GM23248 (cell line): ENCODE measurements at regions of chr9 and their contacts with region 1.

Region 1: GRCh38 chr9:91193658-91194391 is 167.9 kb downstream of the AUH start:
- DNase-seq: peak; percentile 97
- H3K4me3 ChIP-seq: peak overlapping the region; percentile 75
- H3K27ac ChIP-seq: peak overlapping the region; percentile 100
- H3K4me1 ChIP-seq: peaks cover 45% of the 10 kb centered on the region
- H3K27me3 ChIP-seq: no peaks in the 10 kb centered on the region

Region 2: GRCh38 chr9:91378695-91379127 is 184.9 kb after region 1 on chr9:
- in situ Hi-C with region 1: no loop called
- DNase-seq: peak; percentile 53
- H3K4me3 ChIP-seq: no peak overlapping the region
- H3K27ac ChIP-seq: no peak overlapping the region
- H3K4me1 ChIP-seq: peaks cover 22% of the 10 kb centered on the region
- H3K27me3 ChIP-seq: no peaks in the 10 kb centered on the region

Region 3: DNA sequence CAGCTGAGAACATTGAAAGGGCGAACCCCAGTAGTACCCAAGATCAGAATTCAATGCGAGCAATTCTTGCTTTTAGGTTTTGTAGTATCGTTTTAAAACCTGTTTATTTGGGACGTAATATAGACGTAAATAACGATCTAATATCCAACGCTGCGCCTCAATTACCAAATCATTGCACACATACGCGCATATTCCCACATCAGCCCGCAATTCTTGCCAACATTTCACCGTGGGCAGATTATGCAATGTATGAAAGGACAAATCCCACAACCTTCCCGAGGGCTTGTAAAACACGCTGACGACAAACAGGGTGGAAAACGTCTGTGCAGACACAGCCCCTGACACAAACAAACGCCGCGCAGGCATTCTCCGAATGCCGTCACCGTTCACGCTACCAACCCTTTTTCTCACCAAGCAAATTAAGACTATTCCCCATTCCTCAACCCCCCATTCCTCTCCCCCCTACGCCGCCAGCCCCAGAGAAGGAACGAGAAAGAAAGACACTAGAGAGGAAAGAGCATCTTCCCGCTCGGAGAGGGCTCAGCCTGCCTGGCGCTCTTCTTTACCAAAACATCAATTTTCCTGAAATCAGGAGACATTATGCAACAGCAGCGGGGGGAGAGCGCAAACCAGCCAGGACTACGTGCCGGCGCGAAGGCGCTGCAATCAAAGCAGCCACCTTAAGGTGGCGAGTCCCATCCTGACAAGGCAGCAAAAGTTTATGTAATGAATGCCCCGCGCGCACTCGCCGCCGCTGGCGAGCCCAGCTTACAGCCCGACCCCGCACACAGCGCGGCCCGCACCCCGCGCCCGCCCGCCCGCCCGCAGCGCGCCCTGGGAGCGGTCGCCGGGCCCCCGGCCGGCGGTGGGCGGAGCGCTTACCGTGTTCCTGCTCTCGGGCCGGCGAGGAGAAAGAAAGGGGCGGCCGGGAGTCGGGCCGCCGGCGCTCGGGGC is 229.2 kb after region 1 on chr9:
- in situ Hi-C with region 1: loop called (anchors 10 kb)
- DNase-seq: peak; percentile 89
- H3K4me3 ChIP-seq: peak overlapping the region; percentile 99
- H3K27ac ChIP-seq: peak overlapping the region; percentile 97
- H3K4me1 ChIP-seq: peaks cover 30% of the 10 kb centered on the region
- H3K27me3 ChIP-seq: no peaks in the 10 kb centered on the region

Region 4: DNA sequence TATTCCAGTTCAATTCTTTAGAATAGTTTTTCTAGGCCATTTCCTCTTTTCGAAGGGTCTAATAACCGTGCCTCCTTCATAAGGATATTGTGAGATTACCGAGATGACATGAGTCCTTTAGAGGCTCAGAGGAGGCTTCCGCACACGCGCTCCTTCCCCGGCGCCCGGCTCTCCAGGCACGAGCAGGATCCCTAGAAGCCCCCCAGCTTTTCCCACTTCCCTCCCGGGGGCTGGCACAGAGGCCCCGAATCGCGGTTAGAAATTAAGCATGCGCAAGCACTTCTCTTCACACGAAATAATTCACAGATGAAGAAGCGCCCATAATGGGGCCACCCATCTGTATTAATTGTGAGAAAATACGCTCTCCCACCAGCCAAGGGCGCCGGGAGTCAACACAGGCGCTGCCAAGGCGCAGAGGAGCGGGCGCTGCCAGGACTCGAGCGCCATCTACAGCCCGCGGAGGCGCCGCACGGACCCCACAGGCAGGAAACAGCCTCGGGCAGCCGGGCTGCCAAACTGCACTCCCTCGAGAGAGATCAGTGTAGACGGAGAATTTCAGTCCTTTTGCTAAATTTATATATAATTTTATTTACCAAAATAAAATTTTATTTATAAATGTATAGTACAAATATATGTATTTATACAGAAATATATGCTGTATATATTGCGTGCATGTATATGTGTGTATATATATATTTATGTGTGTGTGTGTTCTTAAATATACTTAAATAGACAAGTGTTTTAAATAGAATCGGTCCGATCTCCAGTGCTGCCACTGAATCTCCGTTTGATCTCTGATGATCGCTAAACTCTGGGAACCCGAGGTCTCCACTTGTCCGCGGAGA is 487.9 kb after region 1 on chr9:
- in situ Hi-C with region 1: no loop called
- DNase-seq: peak; percentile 93
- H3K4me3 ChIP-seq: peak overlapping the region; percentile 68
- H3K27ac ChIP-seq: peak overlapping the region; percentile 64; the same call in 1 of the 2 replicates
- H3K4me1 ChIP-seq: peaks cover 27% of the 10 kb centered on the region
- H3K27me3 ChIP-seq: no peaks in the 10 kb centered on the region